ENCODE measurements at regions of chr19 and their contacts with region 1.

Region 1: GRCh38 chr19:32971715-32972540 is at the starts of genes CEP89 and FAAP24:
- DNase-seq: peak; percentile 99
- ATAC-seq: peak; percentile 98
- H3K4me3 ChIP-seq: peak within 1 kb of the TSS; percentile 85
- H3K27ac ChIP-seq: peak within 1 kb of the TSS; percentile 36; the same call in 1 of the 2 replicates
- H3K4me1 ChIP-seq: no peaks in the 10 kb centered on the region
- H3K27me3 ChIP-seq: no peaks in the 10 kb centered on the region
- CTCF ChIP-seq: no peak
- total RNA-seq, gene CEP89: 9.1 and 17.9 TPM in 2 replicates
- total RNA-seq, gene FAAP24: 3.0 and 4.3 TPM in 2 replicates

Region 2: DNA sequence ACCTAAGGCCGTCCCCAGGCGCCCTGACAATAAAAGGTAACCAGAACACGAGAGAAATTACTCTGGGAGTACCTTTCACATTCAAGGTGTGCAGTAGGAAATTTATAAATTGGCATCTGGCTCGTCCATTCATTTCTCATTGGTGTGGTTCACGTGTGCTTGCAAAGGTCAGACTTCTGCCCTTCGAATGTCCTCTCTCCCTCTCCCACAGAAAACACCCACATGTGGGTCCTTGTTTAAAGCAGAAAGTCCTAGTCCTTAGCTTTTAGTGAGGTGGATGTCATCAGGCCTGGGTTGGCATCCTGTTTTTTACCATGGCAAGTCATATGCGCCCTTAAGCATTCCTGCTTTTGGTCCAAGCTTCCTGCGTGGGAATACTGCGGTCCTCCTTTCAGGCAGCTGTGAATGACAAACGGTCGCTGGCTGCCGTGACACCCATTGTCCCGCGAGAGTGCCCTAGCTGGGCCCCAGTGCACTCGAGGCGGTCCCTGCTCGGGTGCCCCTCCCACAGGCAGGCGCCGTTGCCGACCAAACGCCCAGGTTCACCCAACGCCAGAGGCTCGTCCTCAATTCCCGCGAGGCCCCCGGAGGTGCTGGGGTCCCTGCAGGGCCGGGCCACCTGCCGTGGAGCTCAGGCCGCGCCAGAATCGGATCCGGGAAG is 280.5 kb before region 1 on chr19 and contains the start of gene NUDT19:
- CTCF ChIA-PET with region 1: no interaction called
- POLR2A ChIA-PET with region 1: no interaction called
- intact Hi-C with region 1: loop called (anchors 5 kb)
- DNase-seq: peak; percentile 76
- ATAC-seq: peak; percentile 92
- H3K4me3 ChIP-seq: peak within 1 kb of the TSS; percentile 90
- H3K27ac ChIP-seq: peak within 1 kb of the TSS; percentile 34
- H3K4me1 ChIP-seq: peaks cover 18% of the 10 kb centered on the region
- H3K27me3 ChIP-seq: no peaks in the 10 kb centered on the region
- CTCF ChIP-seq: no peak
- total RNA-seq, gene NUDT19: 13.3 TPM in 2 replicates

Region 3: GRCh38 chr19:33071887-33072286 is 100.0 kb after region 1 on chr19:
- CTCF ChIA-PET with region 1: no interaction called
- POLR2A ChIA-PET with region 1: no interaction called
- intact Hi-C with region 1: loop called (anchors 10 kb)
- DNase-seq: peak; percentile 58
- ATAC-seq: peak; percentile 53
- H3K4me3 ChIP-seq: no peak overlapping the region
- H3K27ac ChIP-seq: no peak overlapping the region
- H3K4me1 ChIP-seq: no peaks in the 10 kb centered on the region
- H3K27me3 ChIP-seq: no peaks in the 10 kb centered on the region
- CTCF ChIP-seq: no peak

Region 4: GRCh38 chr19:33118643-33119042 is 146.7 kb after region 1 on chr19:
- CTCF ChIA-PET with region 1: no interaction called
- POLR2A ChIA-PET with region 1: no interaction called
- intact Hi-C with region 1: loop called (anchors 1 kb)
- DNase-seq: no peak
- ATAC-seq: no peak
- H3K4me3 ChIP-seq: no peak overlapping the region
- H3K27ac ChIP-seq: no peak overlapping the region
- H3K4me1 ChIP-seq: no peaks in the 10 kb centered on the region
- H3K27me3 ChIP-seq: no peaks in the 10 kb centered on the region
- CTCF ChIP-seq: no peak

Region 5: GRCh38 chr19:33176670-33177416 is 204.9 kb after region 1 on chr19:
- CTCF ChIA-PET with region 1: no interaction called
- POLR2A ChIA-PET with region 1: no interaction called
- intact Hi-C with region 1: loop called (anchors 5 kb)
- DNase-seq: peak; percentile 95
- ATAC-seq: peak; percentile 88
- H3K4me3 ChIP-seq: peak overlapping the region; percentile 88
- H3K27ac ChIP-seq: peak overlapping the region; percentile 62
- H3K4me1 ChIP-seq: peaks cover 13% of the 10 kb centered on the region; the same call in 1 of the 2 replicates
- H3K27me3 ChIP-seq: no peaks in the 10 kb centered on the region
- CTCF ChIP-seq: no peak